ENCODE measurements at regions of chr20 and their contacts with region 1.

Region 1: GRCh38 chr20:36835453-36836198 is 40.3 kb upstream of the TLDC2 start:
- H3K4me3 Mint-ChIP-seq: peak overlapping the region; percentile 59
- H3K27ac Mint-ChIP-seq: peak overlapping the region; percentile 94
- H3K4me1 Mint-ChIP-seq: peaks cover 46% of the 10 kb centered on the region
- H3K27me3 Mint-ChIP-seq: no peaks in the 10 kb centered on the region

Region 2: DNA sequence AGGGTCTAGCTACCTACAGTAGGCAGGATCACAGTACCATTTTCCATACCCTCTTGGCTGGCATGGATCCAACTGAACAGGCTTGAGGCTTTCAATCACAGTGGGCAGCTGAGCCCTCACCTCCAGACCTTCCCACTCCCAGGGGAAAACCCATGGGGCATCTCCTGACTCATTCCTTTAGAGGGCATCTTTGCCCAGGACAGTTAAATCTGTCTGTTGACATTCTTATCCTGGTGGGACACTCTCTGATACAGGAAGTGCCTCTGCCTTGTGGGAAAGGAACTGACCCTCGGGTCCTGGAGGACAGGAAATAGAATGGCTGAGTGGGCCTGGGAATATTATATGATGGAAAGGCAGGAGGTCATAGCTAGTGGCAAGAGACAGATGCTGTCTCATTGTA is 691.3 kb before region 1 on chr20:
- intact Hi-C with region 1: no loop called
- H3K4me3 Mint-ChIP-seq: no peak overlapping the region
- H3K27ac Mint-ChIP-seq: no peak overlapping the region
- H3K4me1 Mint-ChIP-seq: no peaks in the 10 kb centered on the region
- H3K27me3 Mint-ChIP-seq: peaks cover 14% of the 10 kb centered on the region

Region 3: GRCh38 chr20:36506253-36506652 is 329.4 kb before region 1 on chr20:
- intact Hi-C with region 1: no loop called
- H3K4me3 Mint-ChIP-seq: no peak overlapping the region
- H3K27ac Mint-ChIP-seq: no peak overlapping the region
- H3K4me1 Mint-ChIP-seq: peaks cover 6% of the 10 kb centered on the region
- H3K27me3 Mint-ChIP-seq: no peaks in the 10 kb centered on the region

Region 4: DNA sequence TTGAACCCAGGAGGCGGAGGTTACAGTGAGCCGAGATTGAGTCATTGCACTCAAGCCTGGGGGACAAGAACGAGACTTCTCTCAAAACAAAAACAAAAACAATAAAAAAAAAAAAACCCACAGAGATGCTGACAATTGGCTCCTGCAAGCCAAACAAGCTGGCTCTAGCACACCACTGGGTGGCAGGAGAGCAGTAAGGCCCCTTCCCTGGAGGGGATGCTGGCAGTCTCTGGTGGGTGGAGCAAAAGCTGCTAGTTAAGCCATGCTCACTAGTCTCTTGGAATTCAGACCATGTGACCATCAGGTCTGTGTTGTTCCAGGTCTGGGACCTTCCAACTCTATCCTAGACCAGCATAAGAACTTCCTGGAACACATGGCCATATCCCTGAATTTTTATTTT is 43.2 kb before region 1 on chr20:
- intact Hi-C with region 1: no loop called
- H3K4me3 Mint-ChIP-seq: no peak overlapping the region
- H3K27ac Mint-ChIP-seq: no peak overlapping the region
- H3K4me1 Mint-ChIP-seq: no peaks in the 10 kb centered on the region
- H3K27me3 Mint-ChIP-seq: no peaks in the 10 kb centered on the region

Region 5: GRCh38 chr20:36847009-36847709 is 11.5 kb after region 1 on chr20:
- intact Hi-C with region 1: loop called (anchors 1 kb)
- H3K4me3 Mint-ChIP-seq: no peak overlapping the region
- H3K27ac Mint-ChIP-seq: peak overlapping the region; percentile 37
- H3K4me1 Mint-ChIP-seq: peaks cover 76% of the 10 kb centered on the region
- H3K27me3 Mint-ChIP-seq: no peaks in the 10 kb centered on the region

Region 6: GRCh38 chr20:36886859-36887751 is 51.5 kb after region 1 on chr20:
- intact Hi-C with region 1: loop called (anchors 2 kb)
- H3K4me3 Mint-ChIP-seq: peak overlapping the region; percentile 68
- H3K27ac Mint-ChIP-seq: peak overlapping the region; percentile 65
- H3K4me1 Mint-ChIP-seq: peaks cover 59% of the 10 kb centered on the region
- H3K27me3 Mint-ChIP-seq: no peaks in the 10 kb centered on the region